ENCODE measurements at regions of chr5 and their contacts with region 1.

Region 1: DNA sequence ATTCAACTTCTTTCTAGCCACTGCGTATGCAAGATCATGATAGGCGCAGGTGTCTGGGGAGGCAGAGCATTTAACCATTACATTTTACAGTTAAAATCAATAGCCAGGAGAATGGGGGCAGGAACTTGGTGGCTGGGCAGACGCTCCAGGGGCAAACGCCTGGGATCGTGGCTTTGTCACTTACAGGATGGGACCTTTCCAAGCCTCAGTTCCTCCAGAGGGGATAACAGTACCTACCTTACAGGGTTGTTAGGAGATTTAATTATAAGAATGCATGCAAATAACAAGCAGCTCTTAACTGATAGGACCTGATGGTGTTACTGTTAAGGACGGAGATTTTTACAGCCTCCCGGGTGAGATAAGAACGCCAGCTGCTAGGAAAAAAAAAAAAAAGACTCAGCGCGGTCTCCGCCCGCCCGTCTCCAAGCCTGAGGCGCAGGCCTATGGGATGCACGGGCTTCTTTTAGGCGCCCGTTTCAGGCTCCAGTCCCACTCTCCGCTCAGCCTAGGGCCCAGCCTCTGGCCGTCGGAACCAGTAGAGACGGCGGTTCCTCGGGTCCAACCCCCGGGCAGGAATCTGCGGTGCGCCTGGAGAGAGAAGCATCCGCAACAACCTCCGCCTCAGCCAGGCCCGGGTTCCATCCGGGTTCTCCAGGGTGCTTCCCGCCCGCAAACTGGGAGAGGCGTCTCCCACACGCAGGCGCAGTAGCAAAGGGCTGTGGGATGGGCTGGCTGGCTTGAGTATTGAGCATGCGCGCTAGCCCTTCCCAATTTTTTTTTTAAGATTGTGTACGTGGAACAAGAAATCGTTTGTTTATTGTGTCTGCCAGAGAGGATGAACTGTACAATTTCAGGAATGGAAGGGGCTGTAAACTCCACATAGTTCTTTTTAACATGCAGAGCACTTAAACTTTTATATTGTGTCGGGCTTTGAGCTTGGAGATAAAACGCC is at the start of gene FAM200C:
- DNase-seq: peak; percentile 94 to 97
- ATAC-seq: peak; percentile 97 to 98
- H3K4me3 ChIP-seq: peak within 1 kb of the TSS; percentile 66
- H3K27ac ChIP-seq: peak within 1 kb of the TSS; percentile 89 to 97
- H3K4me1 ChIP-seq: peaks cover 19% of the 10 kb centered on the region
- CTCF ChIP-seq: no peak
- EP300 ChIP-seq: no peak
- POLR2A ChIP-seq: peak; percentile 93
- RAD21 ChIP-seq: no peak
- polyA plus RNA-seq, gene FAM200C: 4.3 TPM in 2 replicates

Region 2: GRCh38 chr5:160418561-160419457 is 19.1 kb after region 1 on chr5 and contains the start of gene SLU7:
- CTCF ChIA-PET with region 1: interaction called, 3 read pairs
- POLR2A ChIA-PET with region 1: interaction called, 11 read pairs
- DNase-seq: peak; percentile 93 to 95
- ATAC-seq: peak; percentile 77 to 88
- H3K4me3 ChIP-seq: peak within 1 kb of the TSS; percentile 75
- H3K27ac ChIP-seq: peak within 1 kb of the TSS; percentile 81 to 89
- H3K4me1 ChIP-seq: peaks cover 40% of the 10 kb centered on the region
- CTCF ChIP-seq: no peak
- EP300 ChIP-seq: no peak
- POLR2A ChIP-seq: peak; percentile 52
- RAD21 ChIP-seq: no peak
- polyA plus RNA-seq, gene SLU7: 49.0 and 67.0 TPM in 2 replicates

Region 3: GRCh38 chr5:160605266-160605665 is 205.6 kb after region 1 on chr5:
- CTCF ChIA-PET with region 1: no interaction called
- POLR2A ChIA-PET with region 1: no interaction called
- DNase-seq: no peak
- ATAC-seq: no peak
- H3K4me3 ChIP-seq: no peak overlapping the region
- H3K27ac ChIP-seq: no peak overlapping the region
- H3K4me1 ChIP-seq: no peaks in the 10 kb centered on the region
- CTCF ChIP-seq: no peak
- EP300 ChIP-seq: no peak
- POLR2A ChIP-seq: no peak
- RAD21 ChIP-seq: no peak